MCF 10A (cell line): ENCODE measurements at regions of chr11 and their contacts with region 1.

Region 1: GRCh38 chr11:122173587-122173986 is 57.6 kb upstream of the BLID start:
- DNase-seq: no peak
- H3K4me3 Mint-ChIP-seq: peak overlapping the region; percentile 42
- H3K27ac Mint-ChIP-seq: peak overlapping the region; percentile 84
- H3K4me1 Mint-ChIP-seq: peaks cover 68% of the 10 kb centered on the region
- H3K27me3 Mint-ChIP-seq: no peaks in the 10 kb centered on the region
- CTCF ChIP-seq: no peak

Region 2: DNA sequence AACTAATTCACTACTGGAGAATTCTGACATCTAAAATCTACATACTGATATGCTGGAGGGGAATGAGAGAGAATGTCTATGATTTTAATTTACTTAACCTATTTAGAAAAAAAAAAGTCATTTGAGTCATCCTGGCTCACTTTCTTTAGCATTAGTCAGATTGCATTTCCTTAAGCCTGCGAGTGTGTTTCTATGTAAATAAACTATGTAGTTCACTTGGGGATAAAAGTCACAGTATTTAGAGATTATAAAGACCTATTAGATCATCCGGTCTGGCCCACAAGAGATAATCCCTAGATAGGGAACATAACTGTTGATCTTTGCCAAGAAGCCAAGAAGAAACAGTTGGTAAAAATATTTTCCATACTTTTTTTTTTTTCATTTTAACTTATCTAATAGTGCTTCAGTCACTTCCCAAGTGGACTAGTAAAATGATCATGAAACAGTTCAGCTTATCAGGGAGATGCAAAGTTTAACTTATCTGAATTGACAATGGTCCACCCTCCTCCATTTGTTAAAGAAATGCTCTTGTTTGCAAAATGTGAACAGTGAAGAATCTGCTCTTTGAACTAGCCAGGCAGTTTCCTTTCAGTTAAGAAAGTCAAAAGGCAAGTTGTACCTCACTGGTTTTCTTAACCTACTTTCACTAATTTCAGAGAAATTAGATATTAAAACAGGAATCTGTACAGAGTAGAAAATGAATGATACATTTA is 36.4 kb before region 1 on chr11:
- CTCF ChIA-PET with region 1: no interaction called
- POLR2A ChIA-PET with region 1: interaction called, 27 read pairs
- intact Hi-C with region 1: no loop called
- DNase-seq: peak; percentile 70
- H3K4me3 Mint-ChIP-seq: no peak overlapping the region
- H3K27ac Mint-ChIP-seq: peak overlapping the region; percentile 89
- H3K4me1 Mint-ChIP-seq: peaks cover 46% of the 10 kb centered on the region
- H3K27me3 Mint-ChIP-seq: no peaks in the 10 kb centered on the region
- CTCF ChIP-seq: no peak

Region 3: GRCh38 chr11:122189229-122189628 is 15.6 kb after region 1 on chr11:
- CTCF ChIA-PET with region 1: interaction called, 4 read pairs
- POLR2A ChIA-PET with region 1: interaction called, 41 read pairs
- intact Hi-C with region 1: no loop called
- DNase-seq: peak; percentile 93
- H3K4me3 Mint-ChIP-seq: peak overlapping the region; percentile 18
- H3K27ac Mint-ChIP-seq: peak overlapping the region; percentile 83
- H3K4me1 Mint-ChIP-seq: peaks cover 38% of the 10 kb centered on the region
- H3K27me3 Mint-ChIP-seq: no peaks in the 10 kb centered on the region
- CTCF ChIP-seq: no peak

Region 4: GRCh38 chr11:122430490-122430889 is 256.9 kb after region 1 on chr11:
- CTCF ChIA-PET with region 1: no interaction called
- POLR2A ChIA-PET with region 1: no interaction called
- intact Hi-C with region 1: no loop called
- DNase-seq: no peak
- H3K4me3 Mint-ChIP-seq: no peak overlapping the region
- H3K27ac Mint-ChIP-seq: no peak overlapping the region
- H3K4me1 Mint-ChIP-seq: no peaks in the 10 kb centered on the region
- H3K27me3 Mint-ChIP-seq: no peaks in the 10 kb centered on the region
- CTCF ChIP-seq: no peak